CD4-positive, alpha-beta memory T cell (primary cell): ENCODE measurements at regions of chr4 and their contacts with region 1.

Region 1: GRCh38 chr4:6909073-6909965 is at the start of gene TBC1D14:
- DNase-seq: peak; percentile 88 to 92 (median 90)
- H3K4me3 ChIP-seq: peak within 1 kb of the TSS; percentile 77 to 78
- H3K4me3 Mint-ChIP-seq: peak within 1 kb of the TSS; percentile 90 to 95 (median 91)
- H3K27ac ChIP-seq: peak within 1 kb of the TSS; percentile 81
- H3K27ac Mint-ChIP-seq: peak within 1 kb of the TSS; percentile 88 to 96 (median 91)
- H3K4me1 ChIP-seq: peaks cover 63% of the 10 kb centered on the region
- H3K4me1 Mint-ChIP-seq: peaks cover 30 to 67% (median 52%) of the 10 kb centered on the region in 4 donors
- H3K27me3 ChIP-seq: no peaks in the 10 kb centered on the region
- H3K27me3 Mint-ChIP-seq: no peaks in the 10 kb centered on the region
- total RNA-seq, gene TBC1D14: 73.7 to 80.7 TPM

Region 2: GRCh38 chr4:6783053-6783981 is 126.0 kb before region 1 on chr4:
- CTCF ChIA-PET with region 1: no interaction called
- POLR2A ChIA-PET with region 1: interaction called, 4 read pairs
- intact Hi-C with region 1: loop called (anchors 1 kb)
- DNase-seq: peak; percentile 87 to 89 (median 88)
- H3K4me3 ChIP-seq: peak overlapping the region; percentile 38 to 71
- H3K4me3 Mint-ChIP-seq: peak overlapping the region; percentile 84 to 92 (median 88)
- H3K27ac ChIP-seq: peak overlapping the region; percentile 96
- H3K27ac Mint-ChIP-seq: peak overlapping the region; percentile 88 to 93 (median 91)
- H3K4me1 ChIP-seq: peaks cover 44% of the 10 kb centered on the region
- H3K4me1 Mint-ChIP-seq: peaks cover 32 to 61% (median 47%) of the 10 kb centered on the region in 4 donors
- H3K27me3 ChIP-seq: no peaks in the 10 kb centered on the region
- H3K27me3 Mint-ChIP-seq: no peaks in the 10 kb centered on the region

Region 3: DNA sequence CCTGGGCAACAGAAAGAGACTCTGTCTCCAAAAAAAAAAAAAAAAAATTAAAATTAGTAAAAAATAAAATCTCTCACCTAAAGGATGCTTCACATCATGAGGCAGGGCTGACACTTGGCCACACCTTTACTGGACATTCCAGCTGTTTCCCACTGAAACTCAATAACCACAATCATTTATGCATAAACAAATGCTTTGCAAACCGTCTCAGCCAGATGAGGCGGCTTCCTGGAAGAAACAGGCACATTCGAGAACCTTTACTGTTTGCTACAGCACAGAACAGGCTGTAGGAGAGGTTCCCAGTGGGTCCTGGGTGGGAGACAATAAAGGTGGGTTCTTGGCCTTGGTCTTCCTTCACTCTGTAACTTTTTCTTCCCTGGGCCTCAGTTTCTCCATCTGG is 10.6 kb before region 1 on chr4:
- CTCF ChIA-PET with region 1: interaction called, 16 read pairs
- POLR2A ChIA-PET with region 1: interaction called, 45 read pairs
- intact Hi-C with region 1: no loop called
- DNase-seq: no peak
- H3K4me3 ChIP-seq: no peak overlapping the region
- H3K4me3 Mint-ChIP-seq: peak overlapping the region in 7 of 8 donors; percentile 18 to 78 (median 67)
- H3K27ac ChIP-seq: no peak overlapping the region
- H3K27ac Mint-ChIP-seq: peak overlapping the region; percentile 82 to 93 (median 88)
- H3K4me1 ChIP-seq: peaks cover 30% of the 10 kb centered on the region
- H3K4me1 Mint-ChIP-seq: peaks cover 13 to 37% (median 24%) of the 10 kb centered on the region in 4 donors
- H3K27me3 ChIP-seq: no peaks in the 10 kb centered on the region
- H3K27me3 Mint-ChIP-seq: no peaks in the 10 kb centered on the region

Region 4: DNA sequence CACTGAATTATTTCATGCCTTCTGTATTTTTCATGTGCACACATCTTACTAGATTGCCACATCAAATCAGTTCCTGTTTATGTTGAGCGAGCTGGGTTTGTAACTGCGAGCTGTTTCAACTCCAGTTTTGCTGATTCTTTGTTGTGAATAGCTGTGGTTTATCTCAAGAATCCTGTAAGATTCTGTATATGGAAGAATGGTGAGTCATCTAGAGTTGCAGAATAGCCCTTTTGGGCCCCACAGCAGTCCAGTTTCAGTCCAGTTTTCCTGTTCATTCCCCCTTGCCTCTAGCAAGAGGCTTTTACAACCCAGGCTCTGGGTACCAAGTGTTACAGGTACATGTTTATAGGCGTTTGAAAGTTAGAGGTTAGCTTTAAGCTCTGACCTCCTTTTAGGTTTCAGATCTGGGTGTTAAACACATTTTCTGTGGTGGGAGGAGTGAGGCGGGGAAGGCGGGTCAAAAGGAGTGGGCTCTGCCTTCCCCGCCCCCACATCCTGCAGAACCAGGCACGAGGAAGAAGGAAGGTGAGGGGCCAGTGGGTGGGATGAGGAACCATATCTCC is 33.0 kb after region 1 on chr4:
- CTCF ChIA-PET with region 1: interaction called, 17 read pairs
- POLR2A ChIA-PET with region 1: interaction called, 65 read pairs
- intact Hi-C with region 1: loop called (anchors 1 kb)
- DNase-seq: peak; percentile 57 to 65 (median 63)
- H3K4me3 ChIP-seq: peak overlapping the region; percentile 25 to 30
- H3K4me3 Mint-ChIP-seq: peak overlapping the region; percentile 73 to 92 (median 82)
- H3K27ac ChIP-seq: peak overlapping the region; percentile 52
- H3K27ac Mint-ChIP-seq: peak overlapping the region; percentile 88 to 98 (median 89)
- H3K4me1 ChIP-seq: peaks cover 79% of the 10 kb centered on the region
- H3K4me1 Mint-ChIP-seq: peaks cover 54 to 87% (median 72%) of the 10 kb centered on the region in 4 donors
- H3K27me3 ChIP-seq: no peaks in the 10 kb centered on the region
- H3K27me3 Mint-ChIP-seq: no peaks in the 10 kb centered on the region

Region 5: GRCh38 chr4:6986781-6987587 is 77.7 kb after region 1 on chr4:
- CTCF ChIA-PET with region 1: interaction called, 19 read pairs
- POLR2A ChIA-PET with region 1: interaction called, 98 read pairs
- intact Hi-C with region 1: loop called (anchors 1 kb)
- DNase-seq: peak; percentile 90 to 93 (median 92)
- H3K4me3 ChIP-seq: peak overlapping the region; percentile 65 to 83
- H3K4me3 Mint-ChIP-seq: peak overlapping the region; percentile 94 to 99 (median 95)
- H3K27ac ChIP-seq: peak overlapping the region; percentile 90
- H3K27ac Mint-ChIP-seq: peak overlapping the region; percentile 95 to 98 (median 96)
- H3K4me1 ChIP-seq: peaks cover 78% of the 10 kb centered on the region
- H3K4me1 Mint-ChIP-seq: peaks cover 57 to 86% (median 70%) of the 10 kb centered on the region in 4 donors
- H3K27me3 ChIP-seq: no peaks in the 10 kb centered on the region
- H3K27me3 Mint-ChIP-seq: no peaks in the 10 kb centered on the region

Region 6: DNA sequence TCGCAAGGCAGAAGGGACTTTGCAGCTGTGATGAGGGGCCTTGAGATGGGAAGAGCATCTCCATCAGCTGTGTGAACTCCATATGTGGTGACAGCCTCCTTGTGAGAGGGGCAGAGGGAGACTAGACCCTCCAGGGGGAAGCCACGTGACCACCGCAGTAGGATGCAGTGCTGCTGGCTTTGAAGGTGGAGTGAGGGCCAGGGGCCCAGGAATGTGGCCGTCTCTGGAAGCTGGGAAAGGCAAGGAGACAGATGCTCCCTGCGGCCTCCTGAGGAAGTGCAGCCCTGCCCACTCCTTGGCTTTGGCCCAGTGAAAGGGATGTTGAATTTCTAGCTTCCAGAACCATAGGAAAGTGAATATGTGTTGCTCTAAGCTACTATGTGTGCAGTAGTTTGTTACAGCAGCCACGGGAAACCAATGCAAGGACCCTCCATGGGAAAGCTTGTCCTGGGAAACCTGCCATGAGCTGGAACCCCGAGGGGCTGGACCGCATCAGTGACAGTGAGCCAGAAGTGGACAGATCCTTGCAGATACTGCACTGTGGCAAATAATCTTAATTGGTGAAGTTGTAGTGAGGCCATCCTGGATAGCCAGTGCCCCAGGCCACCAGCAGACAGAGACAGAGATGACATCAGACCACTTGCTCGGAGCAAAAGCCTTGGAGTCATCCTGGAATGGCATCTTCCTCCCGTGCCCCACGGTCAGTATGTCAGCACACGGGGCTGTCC is 247.6 kb after region 1 on chr4:
- CTCF ChIA-PET with region 1: no interaction called
- POLR2A ChIA-PET with region 1: no interaction called
- intact Hi-C with region 1: no loop called
- DNase-seq: no peak
- H3K4me3 ChIP-seq: no peak overlapping the region
- H3K4me3 Mint-ChIP-seq: no peak overlapping the region
- H3K27ac ChIP-seq: no peak overlapping the region
- H3K27ac Mint-ChIP-seq: no peak overlapping the region
- H3K4me1 ChIP-seq: no peaks in the 10 kb centered on the region
- H3K4me1 Mint-ChIP-seq: no peaks in the 10 kb centered on the region
- H3K27me3 ChIP-seq: no peaks in the 10 kb centered on the region
- H3K27me3 Mint-ChIP-seq: peaks cover 14 to 31% of the 10 kb centered on the region in 2 donors